Activated CD4-positive, alpha-beta T cell treated with anti-CD3 and anti-CD28 coated beads, Interleukin-2, amount 10 ng/mL, durations not matched to agents 24 days and 14 days (primary cell): ENCODE measurements at regions of chr4 and their contacts with region 1.

Region 1: DNA sequence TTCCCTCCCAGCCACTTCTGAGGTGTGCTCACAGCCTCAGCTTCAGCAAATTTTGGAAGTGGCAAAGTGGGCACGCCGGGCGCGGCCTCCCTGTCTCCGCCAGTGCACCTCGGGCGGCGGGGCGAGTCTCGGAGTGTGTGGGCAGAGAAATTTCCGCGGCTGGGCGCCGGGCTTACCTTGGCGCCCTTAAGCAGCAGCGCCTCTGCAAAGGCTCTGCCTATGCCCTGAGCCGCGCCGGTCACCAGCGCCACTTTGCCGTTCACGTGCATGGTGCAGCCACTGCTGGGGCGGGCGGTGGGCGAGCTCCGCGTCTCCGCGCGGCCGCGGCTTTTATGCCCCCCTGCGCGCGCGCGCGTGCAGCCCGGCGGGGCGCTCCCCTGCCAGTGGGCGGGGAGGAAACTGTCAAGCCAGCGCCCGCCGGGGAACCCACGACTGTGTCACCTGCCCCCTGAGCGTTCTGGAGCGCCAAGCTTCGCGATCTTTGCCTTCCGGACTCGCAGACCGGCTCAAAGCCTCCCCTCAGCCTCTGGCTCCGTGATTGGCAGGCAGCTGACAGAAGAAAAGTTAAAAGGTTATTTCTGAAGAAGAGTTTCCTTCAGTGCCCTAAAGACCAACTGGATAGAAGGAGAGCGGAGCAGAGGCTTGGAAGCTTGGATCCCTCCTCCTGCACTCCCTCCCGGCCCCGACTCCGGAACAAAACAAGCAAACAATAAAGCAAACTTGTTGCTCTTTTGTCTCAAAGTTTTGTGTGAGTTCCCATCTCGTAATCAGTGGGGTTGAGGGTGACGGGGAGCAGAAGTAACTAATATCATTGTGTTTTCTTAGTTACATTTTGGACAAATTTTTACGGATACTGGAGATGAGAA is at the start of gene HPGD:
- DNase-seq: peak; percentile 87
- H3K4me3 Mint-ChIP-seq: peak within 1 kb of the TSS; percentile 82
- H3K27ac Mint-ChIP-seq: peak within 1 kb of the TSS; percentile 38
- H3K4me1 Mint-ChIP-seq: peaks cover 12% of the 10 kb centered on the region
- H3K27me3 Mint-ChIP-seq: peaks cover 45% of the 10 kb centered on the region
- total RNA-seq, gene HPGD: 1.1 and 1.4 TPM in 2 replicates

Region 2: GRCh38 chr4:174135936-174136406 is 386.4 kb before region 1 on chr4:
- intact Hi-C with region 1: no loop called
- DNase-seq: no peak
- H3K4me3 Mint-ChIP-seq: no peak overlapping the region
- H3K27ac Mint-ChIP-seq: no peak overlapping the region
- H3K4me1 Mint-ChIP-seq: no peaks in the 10 kb centered on the region
- H3K27me3 Mint-ChIP-seq: peaks cover 2% of the 10 kb centered on the region

Region 3: GRCh38 chr4:174358829-174359228 is 163.6 kb before region 1 on chr4:
- intact Hi-C with region 1: loop called (anchors 5 kb)
- DNase-seq: peak; percentile 75
- H3K4me3 Mint-ChIP-seq: no peak overlapping the region
- H3K27ac Mint-ChIP-seq: peak overlapping the region; percentile 68
- H3K4me1 Mint-ChIP-seq: peaks cover 17% of the 10 kb centered on the region
- H3K27me3 Mint-ChIP-seq: peaks cover 22% of the 10 kb centered on the region

Region 4: GRCh38 chr4:174538123-174538875 is 15.9 kb after region 1 on chr4:
- intact Hi-C with region 1: loop called (anchors 2 kb)
- DNase-seq: peak; percentile 68
- H3K4me3 Mint-ChIP-seq: no peak overlapping the region
- H3K27ac Mint-ChIP-seq: peak overlapping the region; percentile 62
- H3K4me1 Mint-ChIP-seq: peaks cover 9% of the 10 kb centered on the region
- H3K27me3 Mint-ChIP-seq: peaks cover 3% of the 10 kb centered on the region

Region 5: DNA sequence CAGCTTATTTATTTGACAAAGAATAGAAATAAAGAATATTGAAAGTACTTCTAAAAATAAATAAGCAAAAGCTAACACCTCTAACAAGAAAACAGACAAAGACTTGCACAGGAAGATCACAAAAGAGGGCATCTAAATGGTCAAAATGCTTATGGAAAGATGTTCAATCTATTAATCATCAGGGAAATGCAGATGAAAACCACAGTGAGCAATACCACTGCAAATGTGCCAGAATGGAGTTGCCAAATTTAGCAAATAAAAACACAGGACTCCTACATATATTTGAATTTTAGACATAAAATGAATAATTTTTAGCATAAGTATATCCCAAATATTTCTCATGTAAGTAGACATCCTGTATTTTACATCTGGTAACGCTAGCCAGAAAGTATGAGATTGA is 56.0 kb after region 1 on chr4:
- intact Hi-C with region 1: loop called (anchors 5 kb)
- DNase-seq: no peak
- H3K4me3 Mint-ChIP-seq: no peak overlapping the region
- H3K27ac Mint-ChIP-seq: no peak overlapping the region
- H3K4me1 Mint-ChIP-seq: no peaks in the 10 kb centered on the region
- H3K27me3 Mint-ChIP-seq: no peaks in the 10 kb centered on the region